ENCODE measurements at regions of chr17 and their contacts with region 1.

Region 1: DNA sequence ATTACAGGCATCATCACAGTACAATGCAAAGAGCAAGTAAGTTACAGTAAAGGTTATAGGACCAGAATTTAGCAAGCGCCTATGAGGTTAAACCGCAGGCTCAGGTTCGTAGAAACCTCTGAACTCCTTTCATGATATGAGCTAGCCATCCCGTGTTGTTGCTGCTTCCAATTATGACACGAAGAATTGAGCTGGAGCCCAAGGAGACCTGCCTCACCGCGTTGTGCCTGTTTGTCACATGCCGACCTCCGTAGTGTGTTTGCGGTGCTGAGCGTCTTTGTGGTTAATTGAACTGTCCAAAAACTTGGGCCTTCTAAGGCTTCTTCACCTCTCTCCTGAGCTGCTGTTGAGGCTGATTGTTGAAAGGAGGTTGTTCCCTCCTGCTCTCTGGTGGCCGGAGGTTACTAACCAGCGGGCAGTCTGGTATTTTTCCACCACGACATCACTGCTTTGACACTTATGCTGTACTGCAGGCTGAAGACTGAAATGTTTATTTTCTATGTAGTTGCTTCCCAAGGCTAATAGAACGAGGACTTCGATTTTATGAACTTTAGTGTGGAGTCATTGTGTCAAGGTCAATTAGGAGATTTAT is 67.5 kb downstream of the SEC14L1 start:
- DNase-seq: peak; percentile 78
- H3K4me3 ChIP-seq: no peak overlapping the region
- H3K27ac ChIP-seq: peak overlapping the region; percentile 91
- H3K4me1 ChIP-seq: peaks cover 58% of the 10 kb centered on the region
- H3K27me3 ChIP-seq: no peaks in the 10 kb centered on the region
- CTCF ChIP-seq: peak in 1 of 2 donors; percentile 49
- POLR2A ChIP-seq: peak; percentile 42

Region 2: GRCh38 chr17:77088455-77089123 is 119.7 kb before region 1 on chr17:
- CTCF ChIA-PET with region 1: interaction called, 16 read pairs
- POLR2A ChIA-PET with region 1: no interaction called
- dilution Hi-C with region 1: no loop called
- intact Hi-C with region 1: loop called (anchors 2 kb)
- DNase-seq: peak; percentile 96
- H3K4me3 ChIP-seq: peak overlapping the region; percentile 68 to 92 (median 73)
- H3K27ac ChIP-seq: peak overlapping the region; percentile 94
- H3K4me1 ChIP-seq: peaks cover 56% of the 10 kb centered on the region
- H3K27me3 ChIP-seq: no peaks in the 10 kb centered on the region
- CTCF ChIP-seq: peak; percentile 78 to 95
- POLR2A ChIP-seq: peak; percentile 80

Region 3: GRCh38 chr17:77164483-77165091 is 43.7 kb before region 1 on chr17:
- CTCF ChIA-PET with region 1: interaction called, 4 read pairs
- POLR2A ChIA-PET with region 1: interaction called, 3 read pairs
- dilution Hi-C with region 1: no loop called
- intact Hi-C with region 1: loop called (anchors 5 kb)
- DNase-seq: peak; percentile 93
- H3K4me3 ChIP-seq: peak overlapping the region in 1 of 3 experiments; percentile 25
- H3K27ac ChIP-seq: peak overlapping the region; percentile 88
- H3K4me1 ChIP-seq: peaks cover 71% of the 10 kb centered on the region
- H3K27me3 ChIP-seq: no peaks in the 10 kb centered on the region
- CTCF ChIP-seq: no peak
- POLR2A ChIP-seq: no peak

Region 4: GRCh38 chr17:77182205-77183172 is 25.8 kb before region 1 on chr17:
- CTCF ChIA-PET with region 1: interaction called, 3 read pairs
- POLR2A ChIA-PET with region 1: no interaction called
- dilution Hi-C with region 1: no loop called
- intact Hi-C with region 1: loop called (anchors 2 kb)
- DNase-seq: peak; percentile 56
- H3K4me3 ChIP-seq: peak overlapping the region in 1 of 3 experiments; percentile 25
- H3K27ac ChIP-seq: peak overlapping the region; percentile 47
- H3K4me1 ChIP-seq: peaks cover 51% of the 10 kb centered on the region
- H3K27me3 ChIP-seq: no peaks in the 10 kb centered on the region
- CTCF ChIP-seq: no peak
- POLR2A ChIP-seq: peak; percentile 51

Region 5: GRCh38 chr17:77235370-77235941 is 27.1 kb after region 1 on chr17:
- CTCF ChIA-PET with region 1: no interaction called
- POLR2A ChIA-PET with region 1: no interaction called
- dilution Hi-C with region 1: no loop called
- intact Hi-C with region 1: loop called (anchors 2 kb)
- DNase-seq: peak; percentile 73
- H3K4me3 ChIP-seq: peak overlapping the region in 1 of 3 experiments; percentile 15
- H3K27ac ChIP-seq: peak overlapping the region; percentile 81
- H3K4me1 ChIP-seq: peaks cover 23% of the 10 kb centered on the region
- H3K27me3 ChIP-seq: no peaks in the 10 kb centered on the region
- CTCF ChIP-seq: no peak
- POLR2A ChIP-seq: peak; percentile 57

Region 6: GRCh38 chr17:77345260-77345910 is 137.1 kb after region 1 on chr17:
- CTCF ChIA-PET with region 1: no interaction called
- POLR2A ChIA-PET with region 1: no interaction called
- dilution Hi-C with region 1: no loop called
- intact Hi-C with region 1: no loop called
- DNase-seq: no peak
- H3K4me3 ChIP-seq: no peak overlapping the region
- H3K27ac ChIP-seq: no peak overlapping the region
- H3K4me1 ChIP-seq: peaks cover 15% of the 10 kb centered on the region
- H3K27me3 ChIP-seq: peaks cover 2 to 9% of the 10 kb centered on the region in 2 experiments
- CTCF ChIP-seq: no peak
- POLR2A ChIP-seq: no peak

Measured in endothelial cell of umbilical vein (primary cell).